ENCODE measurements at regions of chr3 and their contacts with region 1.

Region 1: DNA sequence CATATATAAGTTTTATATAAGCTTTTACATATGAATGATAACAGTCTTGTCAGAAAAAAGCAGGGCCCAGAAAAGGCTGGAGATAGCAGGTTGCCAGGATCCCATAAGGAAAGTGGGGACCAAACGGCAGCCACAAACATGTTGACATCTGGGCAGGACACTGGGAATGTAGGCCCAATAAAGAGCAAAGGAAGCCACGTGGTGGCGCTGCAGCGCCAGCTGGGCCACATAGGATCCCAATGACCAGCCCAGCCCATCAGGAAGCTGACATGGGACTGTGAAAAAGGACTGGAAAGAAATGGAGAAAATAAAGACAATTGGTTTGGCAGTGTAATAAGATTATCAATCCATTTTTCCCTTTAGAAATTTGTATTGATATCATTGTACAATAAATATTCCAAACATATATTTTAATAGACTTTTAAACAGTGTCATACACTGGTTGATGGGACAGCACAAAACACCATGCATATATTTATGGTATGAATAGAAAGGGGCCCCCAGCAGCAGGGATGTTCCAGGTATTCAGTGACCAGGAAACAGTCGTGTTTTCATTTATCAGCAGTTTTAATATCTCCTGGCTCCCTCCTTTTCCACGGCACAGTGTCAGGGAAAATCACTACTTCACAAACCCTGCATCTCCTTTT is 89.0 kb upstream of the STRIT1 start:
- DNase-seq: peak; percentile 91
- ATAC-seq: peak; percentile 100
- H3K4me3 ChIP-seq: no peak overlapping the region
- H3K27ac ChIP-seq: no peak overlapping the region
- H3K4me1 ChIP-seq: peaks cover 6% of the 10 kb centered on the region
- H3K27me3 ChIP-seq: no peaks in the 10 kb centered on the region
- CTCF ChIP-seq: peak; percentile 94

Region 2: GRCh38 chr3:155352900-155353490 is 29.5 kb before region 1 on chr3:
- CTCF ChIA-PET with region 1: no interaction called
- POLR2A ChIA-PET with region 1: no interaction called
- intact Hi-C with region 1: loop called (anchors 1 kb)
- DNase-seq: peak; percentile 84
- ATAC-seq: peak; percentile 62
- H3K4me3 ChIP-seq: no peak overlapping the region
- H3K27ac ChIP-seq: no peak overlapping the region
- H3K4me1 ChIP-seq: peaks cover 3% of the 10 kb centered on the region; the same call in 1 of the 2 replicates
- H3K27me3 ChIP-seq: no peaks in the 10 kb centered on the region
- CTCF ChIP-seq: peak; percentile 81

Region 3: DNA sequence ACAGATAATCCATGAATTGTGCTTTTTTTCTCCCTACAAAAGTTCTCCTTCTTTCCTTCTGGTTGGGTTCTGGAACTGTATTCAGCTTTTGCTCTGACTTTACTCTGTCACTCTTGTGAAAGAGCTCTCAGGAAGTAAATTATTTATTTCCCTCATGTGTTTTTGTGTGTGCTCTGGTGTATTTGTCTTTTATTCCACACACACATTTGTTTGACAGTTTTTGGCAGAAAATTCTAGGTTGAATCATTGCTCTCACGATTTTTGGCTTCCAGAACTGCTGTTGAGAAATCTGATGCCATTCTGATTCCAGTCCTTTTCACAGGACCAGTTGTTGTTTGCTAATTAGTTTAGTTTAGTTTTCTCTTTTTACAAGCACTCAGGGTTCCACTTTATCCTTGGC is 189.6 kb after region 1 on chr3:
- CTCF ChIA-PET with region 1: no interaction called
- POLR2A ChIA-PET with region 1: no interaction called
- intact Hi-C with region 1: loop called (anchors 10 kb)
- DNase-seq: peak; percentile 24
- ATAC-seq: peak; percentile 74
- H3K4me3 ChIP-seq: no peak overlapping the region
- H3K27ac ChIP-seq: no peak overlapping the region
- H3K4me1 ChIP-seq: no peaks in the 10 kb centered on the region
- H3K27me3 ChIP-seq: no peaks in the 10 kb centered on the region
- CTCF ChIP-seq: no peak

Region 4: DNA sequence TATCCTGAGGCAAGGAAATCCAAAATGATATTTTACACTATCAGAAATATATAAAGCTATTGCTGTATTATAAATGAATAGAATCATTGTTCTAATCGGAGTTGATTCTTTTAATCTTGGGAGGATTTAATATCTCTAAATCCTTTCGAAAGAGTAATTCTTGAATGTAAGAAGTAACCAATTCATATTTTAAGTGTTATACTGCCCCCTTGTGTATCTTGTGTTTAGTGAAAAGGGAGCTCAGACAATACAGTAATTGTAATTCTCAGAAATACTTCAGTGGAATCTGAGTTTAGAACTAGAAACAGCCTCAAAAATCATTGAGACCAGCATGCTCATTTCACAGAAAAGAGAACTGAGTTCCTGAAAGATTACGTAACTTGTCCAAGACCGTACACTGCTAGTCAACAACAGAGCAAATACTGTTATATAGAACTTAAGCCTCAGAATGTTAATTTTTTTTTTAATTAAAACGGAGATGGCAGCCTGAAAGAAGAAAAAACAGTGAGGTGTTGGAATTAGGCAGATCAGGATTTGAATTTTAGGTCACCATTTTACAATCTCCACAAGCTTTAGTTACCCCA is 319.5 kb after region 1 on chr3:
- CTCF ChIA-PET with region 1: interaction called, 37 read pairs
- POLR2A ChIA-PET with region 1: no interaction called
- intact Hi-C with region 1: loop called (anchors 1 kb)
- DNase-seq: peak; percentile 90
- ATAC-seq: peak; percentile 41
- H3K4me3 ChIP-seq: no peak overlapping the region
- H3K27ac ChIP-seq: no peak overlapping the region
- H3K4me1 ChIP-seq: peaks cover 14% of the 10 kb centered on the region
- H3K27me3 ChIP-seq: no peaks in the 10 kb centered on the region
- CTCF ChIP-seq: peak; percentile 89

Region 5: GRCh38 chr3:155854141-155854940 is 471.8 kb after region 1 on chr3 and contains the start of gene SLC33A1:
- CTCF ChIA-PET with region 1: interaction called, 4 read pairs
- POLR2A ChIA-PET with region 1: no interaction called
- intact Hi-C with region 1: loop called (anchors 10 kb)
- DNase-seq: peak; percentile 99
- ATAC-seq: peak; percentile 94
- H3K4me3 ChIP-seq: peak within 1 kb of the TSS; percentile 95
- H3K27ac ChIP-seq: peak within 1 kb of the TSS; percentile 54
- H3K4me1 ChIP-seq: peaks cover 11% of the 10 kb centered on the region; the same call in 1 of the 2 replicates
- H3K27me3 ChIP-seq: no peaks in the 10 kb centered on the region
- CTCF ChIP-seq: no peak
- total RNA-seq, gene SLC33A1: 32.3 and 32.9 TPM in 2 replicates

Measured in PC-3 (cell line).